Testis (tissue), 5 donors: ENCODE measurements at regions of chr4 and their contacts with region 1.

Region 1: DNA sequence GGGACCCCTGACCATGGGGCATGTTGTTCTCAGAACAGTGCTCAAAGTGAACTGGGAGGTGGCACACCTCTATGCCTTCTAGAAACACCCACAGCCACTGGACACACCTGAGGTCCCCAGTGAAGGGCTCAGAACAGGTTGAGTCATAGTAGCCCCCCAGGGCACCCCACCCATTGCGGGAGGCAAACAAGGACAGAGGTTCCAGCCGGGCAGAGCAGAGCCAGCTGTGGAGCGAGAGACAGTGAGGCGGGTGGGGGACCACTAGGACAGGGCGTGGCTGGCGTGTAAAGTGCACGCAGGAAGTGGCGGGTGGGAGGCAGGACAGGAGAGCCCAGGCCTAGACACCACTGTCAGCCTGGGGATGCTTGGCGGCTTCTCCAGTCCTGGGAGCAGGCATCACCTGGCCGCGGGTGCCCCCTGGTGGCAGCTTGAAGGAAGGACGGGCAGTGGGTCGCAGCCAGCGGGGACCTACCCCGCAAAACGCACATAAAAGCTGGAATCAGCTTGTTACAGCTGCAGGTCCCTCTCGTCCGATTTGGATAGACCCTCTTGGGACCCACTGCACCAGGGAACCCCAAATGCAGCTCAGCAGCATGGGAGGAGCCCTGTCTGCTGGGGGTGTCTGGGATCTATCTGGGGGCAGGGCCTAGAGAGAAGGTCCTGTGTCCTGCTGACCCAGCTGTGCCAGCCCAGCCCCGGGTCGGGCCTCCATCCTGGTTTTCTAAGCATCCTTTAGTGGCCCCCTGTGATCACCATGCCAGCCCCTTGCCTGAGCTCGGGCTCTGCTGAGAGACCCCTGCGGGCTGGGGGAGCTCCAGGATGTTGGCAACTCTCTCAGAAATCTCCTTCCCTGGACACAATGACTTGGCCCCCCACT is 57.6 kb downstream of the WFS1 start:
- DNase-seq: peak; percentile 87
- H3K4me3 ChIP-seq: no peak overlapping the region
- H3K27ac ChIP-seq: no peak overlapping the region
- H3K4me1 ChIP-seq: no peaks in the 10 kb centered on the region
- H3K27me3 ChIP-seq: no peaks in the 10 kb centered on the region
- CTCF ChIP-seq: peak; percentile 96 to 98 (median 97)
- POLR2A ChIP-seq: no peak

Region 2: GRCh38 chr4:6269616-6270511 is 57.4 kb before region 1 on chr4 and contains the start of gene WFS1:
- intact Hi-C with region 1: loop called (anchors 5 kb)
- DNase-seq: peak; percentile 99
- H3K4me3 ChIP-seq: peak within 1 kb of the TSS; percentile 63 to 95
- H3K27ac ChIP-seq: peak within 1 kb of the TSS; percentile 76 to 80
- H3K4me1 ChIP-seq: peaks cover 46% of the 10 kb centered on the region
- H3K27me3 ChIP-seq: no peaks in the 10 kb centered on the region
- CTCF ChIP-seq: no peak
- POLR2A ChIP-seq: no peak
- total RNA-seq, gene WFS1: 124 to 202 TPM

Region 3: GRCh38 chr4:6546681-6547447 is 219.6 kb after region 1 on chr4:
- intact Hi-C with region 1: loop called (anchors 10 kb)
- DNase-seq: peak; percentile 81
- H3K4me3 ChIP-seq: no peak overlapping the region
- H3K27ac ChIP-seq: no peak overlapping the region
- H3K4me1 ChIP-seq: no peaks in the 10 kb centered on the region
- H3K27me3 ChIP-seq: no peaks in the 10 kb centered on the region
- CTCF ChIP-seq: peak; percentile 68 to 85 (median 83)
- POLR2A ChIP-seq: no peak